HAP-1 (cell line): ENCODE measurements at regions of chr1 and their contacts with region 1.

Region 1: DNA sequence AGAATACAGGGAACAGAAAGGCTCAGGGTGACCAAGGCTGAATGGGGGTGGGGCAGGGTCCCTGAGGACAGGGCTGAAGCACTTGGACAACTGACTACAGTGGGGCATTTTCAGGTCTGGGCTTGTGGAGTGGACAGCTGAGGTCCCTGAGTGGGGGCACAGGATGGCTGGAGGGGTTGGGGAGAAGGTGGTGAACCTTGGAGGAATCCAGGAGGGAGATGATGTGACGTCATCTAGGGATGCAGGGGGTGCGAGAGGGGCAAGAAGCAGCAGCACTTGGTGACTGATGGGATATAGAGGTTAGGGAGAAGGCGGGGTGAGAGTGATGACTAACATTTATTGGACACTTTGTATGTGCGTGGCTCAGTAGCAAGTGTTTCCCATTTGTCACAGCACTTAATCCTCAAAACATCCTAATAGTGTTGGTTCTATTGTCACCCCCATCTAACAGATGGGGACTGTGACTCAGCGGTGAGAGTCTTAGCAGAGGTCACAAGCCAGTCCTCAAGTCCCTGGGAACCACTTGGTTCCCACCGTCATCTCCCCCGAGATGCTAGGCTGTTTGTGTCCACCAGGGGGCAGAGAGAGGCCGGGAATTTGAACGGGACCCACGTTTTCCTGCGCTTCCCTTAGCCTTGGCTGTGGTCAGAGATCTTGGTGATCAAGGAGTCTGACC is 27.9 kb upstream of the BMP8B start:
- DNase-seq: peak; percentile 49 to 70
- H3K4me3 ChIP-seq: no peak overlapping the region
- H3K4me1 ChIP-seq: no peaks in the 10 kb centered on the region
- H3K27me3 ChIP-seq: no peaks in the 10 kb centered on the region; the same call in 1 of the 2 replicates

Region 2: GRCh38 chr1:40039757-40040510 is 223.4 kb after region 1 on chr1:
- in situ Hi-C with region 1: loop called (anchors 10 kb)
- DNase-seq: peak; percentile 75 to 88
- H3K4me3 ChIP-seq: peak overlapping the region; percentile 94
- H3K4me1 ChIP-seq: peaks cover 7% of the 10 kb centered on the region; the same call in 1 of the 2 replicates
- H3K27me3 ChIP-seq: no peaks in the 10 kb centered on the region

Region 3: DNA sequence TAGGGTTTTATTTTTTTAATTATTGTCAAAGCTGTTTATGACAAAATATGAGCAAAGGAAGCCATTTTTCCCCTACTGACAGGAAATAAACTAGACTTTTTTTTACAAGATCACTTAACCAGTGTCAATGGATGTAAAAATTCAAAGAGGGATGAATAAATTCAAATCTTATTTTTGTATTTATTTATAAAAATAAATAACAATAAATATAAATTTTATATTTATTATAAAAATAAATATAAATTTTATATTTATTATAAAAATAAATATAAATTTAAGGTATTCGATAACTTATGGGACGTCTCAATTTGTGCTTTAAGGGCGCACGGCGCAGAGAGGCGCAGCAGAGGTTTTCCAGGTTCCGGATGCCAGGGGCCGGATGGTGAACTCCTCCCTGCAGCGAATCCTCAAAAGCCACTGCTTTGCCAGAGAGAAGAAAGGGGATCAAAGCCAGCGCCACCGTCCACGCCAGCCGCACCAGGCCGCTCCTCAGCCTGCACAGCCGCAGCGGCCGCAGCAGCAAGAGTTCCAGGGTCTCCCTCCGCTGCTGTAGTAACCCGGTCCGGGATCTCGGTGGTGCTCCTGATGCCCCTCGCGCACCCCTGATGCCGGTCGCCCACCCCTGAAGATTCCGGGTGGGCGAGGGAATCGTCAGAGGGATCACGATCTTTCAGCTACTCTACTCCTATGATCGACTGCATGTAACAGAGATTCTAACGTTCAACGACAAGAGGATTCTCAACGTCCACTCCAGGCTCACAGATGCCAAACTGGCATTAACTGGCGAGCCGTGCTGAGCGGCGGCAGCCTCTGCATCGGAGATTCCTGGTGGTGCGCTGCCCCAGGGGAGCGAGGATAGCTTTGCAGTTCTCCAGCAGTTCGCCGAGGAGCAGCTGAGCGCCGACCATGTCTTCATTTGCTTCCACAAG is 316.1 kb after region 1 on chr1:
- in situ Hi-C with region 1: no loop called
- DNase-seq: no peak
- H3K4me3 ChIP-seq: no peak overlapping the region
- H3K4me1 ChIP-seq: no peaks in the 10 kb centered on the region; the same call in 1 of the 2 replicates
- H3K27me3 ChIP-seq: peaks cover 2% of the 10 kb centered on the region